CD8-positive, alpha-beta T cell (primary cell): ENCODE measurements at regions of chr10 and their contacts with region 1.

Region 1: DNA sequence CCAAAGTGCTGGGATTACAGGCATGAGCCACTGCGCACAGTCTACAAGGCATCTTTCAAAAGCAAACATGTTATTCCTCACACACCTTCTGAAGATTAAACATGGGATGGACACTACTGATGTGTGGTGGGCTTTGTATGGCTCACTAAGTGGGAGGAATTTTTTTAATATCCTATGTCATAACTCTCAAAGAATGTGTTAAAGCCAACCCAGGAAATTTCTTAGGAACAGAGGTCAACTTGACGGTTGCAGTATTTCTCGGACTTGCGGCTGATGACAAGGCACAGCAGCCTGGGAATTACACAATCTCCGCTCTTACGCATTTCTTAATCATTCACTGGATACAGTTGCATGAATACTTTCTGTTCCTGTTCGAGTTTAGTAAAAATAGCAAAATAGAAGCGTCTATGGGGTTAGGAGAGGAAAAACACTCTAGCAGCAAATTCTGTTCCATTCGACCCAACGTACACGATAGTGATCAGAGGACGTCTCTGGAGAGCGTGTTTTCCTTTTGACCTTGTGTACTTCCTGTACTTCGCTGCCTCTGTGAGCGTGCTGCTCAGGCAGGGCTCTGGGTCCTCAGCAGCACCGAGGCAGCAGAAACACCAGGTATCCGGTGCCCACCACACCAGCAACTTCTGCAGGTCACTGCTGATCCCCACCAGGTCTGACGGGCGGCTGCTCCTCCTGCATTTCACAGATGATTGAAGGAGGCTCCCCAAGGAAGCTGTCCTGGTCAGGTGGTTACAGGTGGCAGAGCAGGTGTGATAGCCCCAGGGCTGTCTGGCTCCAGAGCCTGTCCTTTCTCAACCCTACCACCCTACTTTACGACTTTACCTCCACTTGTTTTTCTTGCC is 26.4 kb upstream of the SRGN start:
- DNase-seq: peak in 7 of 9 experiments; percentile 22 to 73 (median 39)
- ATAC-seq: peak; percentile 83
- H3K4me3 ChIP-seq: peak overlapping the region; percentile 13 to 21
- H3K4me3 Mint-ChIP-seq: peak overlapping the region; percentile 79
- H3K27ac ChIP-seq: peak overlapping the region in 1 of 2 experiments; percentile 34
- H3K27ac Mint-ChIP-seq: peak overlapping the region; percentile 84
- H3K4me1 ChIP-seq: peaks cover 27% of the 10 kb centered on the region
- H3K4me1 Mint-ChIP-seq: peaks cover 31% of the 10 kb centered on the region
- H3K27me3 ChIP-seq: no peaks in the 10 kb centered on the region
- H3K27me3 Mint-ChIP-seq: no peaks in the 10 kb centered on the region
- CTCF ChIP-seq: no peak

Region 2: GRCh38 chr10:69014171-69014570 is 47.4 kb before region 1 on chr10:
- CTCF ChIA-PET with region 1: no interaction called
- POLR2A ChIA-PET with region 1: no interaction called
- intact Hi-C with region 1: loop called in 1 of 2 experiments (anchors 5 kb)
- DNase-seq: no peak
- ATAC-seq: no peak
- H3K4me3 ChIP-seq: no peak overlapping the region
- H3K4me3 Mint-ChIP-seq: no peak overlapping the region
- H3K27ac ChIP-seq: no peak overlapping the region
- H3K27ac Mint-ChIP-seq: no peak overlapping the region
- H3K4me1 ChIP-seq: no peaks in the 10 kb centered on the region
- H3K4me1 Mint-ChIP-seq: no peaks in the 10 kb centered on the region
- H3K27me3 ChIP-seq: no peaks in the 10 kb centered on the region
- H3K27me3 Mint-ChIP-seq: no peaks in the 10 kb centered on the region
- CTCF ChIP-seq: no peak

Region 3: GRCh38 chr10:69179743-69180524 is 118.4 kb after region 1 on chr10 and contains the start of gene SUPV3L1:
- CTCF ChIA-PET with region 1: no interaction called
- POLR2A ChIA-PET with region 1: no interaction called
- intact Hi-C with region 1: no loop called
- DNase-seq: peak; percentile 71 to 96 (median 87)
- ATAC-seq: peak; percentile 70
- H3K4me3 ChIP-seq: peak within 1 kb of the TSS; percentile 88 to 90
- H3K4me3 Mint-ChIP-seq: peak within 1 kb of the TSS; percentile 91
- H3K27ac ChIP-seq: peak within 1 kb of the TSS; percentile 97 to 98
- H3K27ac Mint-ChIP-seq: peak within 1 kb of the TSS; percentile 99
- H3K4me1 ChIP-seq: peaks cover 24% of the 10 kb centered on the region
- H3K4me1 Mint-ChIP-seq: peaks cover 41% of the 10 kb centered on the region
- H3K27me3 ChIP-seq: no peaks in the 10 kb centered on the region
- H3K27me3 Mint-ChIP-seq: no peaks in the 10 kb centered on the region
- CTCF ChIP-seq: no peak
- total RNA-seq, gene SUPV3L1: 89.3 to 99.6 TPM

Region 4: DNA sequence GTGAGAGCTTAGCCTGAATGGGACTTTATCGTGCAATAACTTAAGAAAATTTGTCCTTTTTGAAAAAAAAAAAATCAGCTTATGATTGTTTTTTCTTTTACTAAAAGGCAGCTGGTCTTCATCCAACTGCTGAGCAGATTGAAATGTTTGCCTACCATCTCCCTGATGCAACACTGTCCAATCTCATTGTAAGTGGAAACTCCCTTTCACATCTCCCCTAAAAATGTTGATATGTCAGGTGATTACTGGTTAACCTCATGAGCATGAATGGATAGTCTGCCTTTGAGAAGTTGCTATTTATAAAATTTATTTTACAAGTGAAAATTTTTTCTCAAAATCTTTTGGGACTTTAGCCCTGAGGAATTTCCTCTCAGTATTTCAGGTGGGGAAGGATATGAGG is 140.8 kb after region 1 on chr10:
- CTCF ChIA-PET with region 1: no interaction called
- POLR2A ChIA-PET with region 1: no interaction called
- intact Hi-C with region 1: no loop called
- DNase-seq: peak in 2 of 9 experiments; percentile 66 to 75
- ATAC-seq: peak; percentile 57
- H3K4me3 ChIP-seq: no peak overlapping the region
- H3K4me3 Mint-ChIP-seq: no peak overlapping the region
- H3K27ac ChIP-seq: peak overlapping the region in 1 of 2 experiments; percentile 51
- H3K27ac Mint-ChIP-seq: peak overlapping the region; percentile 79
- H3K4me1 ChIP-seq: peaks cover 19% of the 10 kb centered on the region
- H3K4me1 Mint-ChIP-seq: peaks cover 24% of the 10 kb centered on the region
- H3K27me3 ChIP-seq: no peaks in the 10 kb centered on the region
- H3K27me3 Mint-ChIP-seq: no peaks in the 10 kb centered on the region
- CTCF ChIP-seq: no peak